ENCODE measurements at regions of chr17 and their contacts with region 1.

Region 1: GRCh38 chr17:7314719-7315569 is at the start of gene GPS2:
- DNase-seq: peak; percentile 90 to 99 (median 94)

Region 2: DNA sequence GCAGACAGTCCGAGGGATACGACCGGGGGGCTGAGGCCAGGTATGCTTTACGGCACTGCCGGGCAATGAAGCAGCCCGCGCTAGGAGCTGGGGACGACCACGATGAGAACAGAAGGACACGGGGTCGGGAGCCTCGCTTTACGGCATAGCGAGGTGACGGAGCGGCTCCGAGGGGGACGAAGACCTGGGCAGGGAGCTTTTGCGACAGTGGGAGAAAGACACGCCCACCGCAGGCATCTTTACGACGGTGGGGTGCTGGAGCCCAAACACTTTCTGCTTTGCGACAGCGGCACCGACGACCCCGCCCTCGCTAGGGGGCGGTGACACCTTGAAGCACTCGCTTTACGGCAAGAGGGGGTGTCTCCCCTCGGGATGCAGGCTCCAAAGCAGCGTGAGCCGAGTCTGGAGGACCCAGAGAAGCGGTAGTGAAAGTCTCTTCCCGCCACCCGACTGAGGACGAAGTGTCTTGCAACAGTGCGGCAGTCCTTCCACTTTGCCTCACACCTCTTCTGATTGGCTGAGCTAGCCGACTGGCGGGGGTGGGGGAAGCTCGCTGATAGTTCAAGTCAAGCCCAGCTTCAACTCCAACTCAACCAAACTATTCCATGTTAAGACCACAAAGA is 14.5 kb after region 1 on chr17:
- intact Hi-C with region 1: loop called (anchors 1 kb)
- DNase-seq: peak; percentile 94 to 99 (median 97)

Region 3: GRCh38 chr17:7393613-7394451 is 78.9 kb after region 1 on chr17:
- intact Hi-C with region 1: no loop called
- DNase-seq: peak in 1 of 10 donors; percentile 82

Region 4: GRCh38 chr17:7403977-7404736 is 89.2 kb after region 1 on chr17 and contains the start of gene TMEM256:
- intact Hi-C with region 1: no loop called
- DNase-seq: peak; percentile 99 to 100 (median 100)

Measured in posterior cingulate gyrus (tissue), 11 donors.